Natural killer cell (primary cell): ENCODE measurements at regions of chr17 and their contacts with region 1.

Region 1: DNA sequence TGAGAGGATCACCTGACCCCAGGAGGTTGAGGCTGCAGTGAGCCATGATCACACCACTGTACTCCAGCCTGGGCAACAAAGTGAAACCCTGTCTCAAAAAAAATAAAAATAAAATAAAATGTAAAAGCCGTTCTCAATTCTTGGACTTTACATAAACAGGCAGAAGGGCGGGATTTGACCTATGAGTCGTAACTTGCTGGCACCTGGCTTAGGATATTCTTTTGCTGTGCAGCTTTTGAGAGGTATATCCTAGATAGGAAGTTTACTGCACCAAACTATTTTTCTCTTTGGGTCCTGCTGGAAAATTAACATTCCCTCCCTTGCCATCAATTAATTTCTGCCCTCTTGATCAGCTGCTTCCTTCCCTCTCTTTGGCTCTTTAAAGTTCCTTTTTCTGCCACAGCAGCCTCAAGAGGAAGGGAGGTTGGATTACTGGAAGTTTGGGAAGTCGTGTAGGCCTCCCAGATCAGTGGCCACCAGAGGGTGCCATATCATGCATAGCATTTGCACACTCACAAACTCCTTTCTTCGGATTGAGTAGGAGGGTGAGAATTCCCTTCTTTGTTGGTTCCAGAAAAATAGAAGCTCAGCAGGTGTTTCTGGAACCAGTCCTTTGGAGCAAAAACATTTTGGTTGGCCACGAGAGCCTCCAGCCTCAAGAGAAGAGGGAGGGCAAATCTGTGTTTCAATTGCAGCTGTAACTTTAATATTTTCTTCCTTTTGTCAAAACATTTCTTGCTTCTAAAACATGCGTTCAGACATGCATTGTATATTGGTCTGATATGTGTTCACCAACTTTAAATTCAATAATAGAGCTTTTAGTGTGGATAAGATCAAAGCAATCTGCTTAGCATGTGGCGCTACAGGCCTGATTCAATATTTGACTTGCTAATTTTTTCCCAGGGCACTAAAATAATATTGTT is 147.3 kb downstream of the CCDC182 start:
- DNase-seq: peak in 1 of 2 donors; percentile 67
- ATAC-seq: no peak
- H3K4me3 ChIP-seq: no peak overlapping the region
- H3K4me3 Mint-ChIP-seq: peak overlapping the region; percentile 28
- H3K27ac ChIP-seq: no peak overlapping the region
- H3K27ac Mint-ChIP-seq: no peak overlapping the region
- H3K4me1 ChIP-seq: peaks cover 49% of the 10 kb centered on the region
- H3K4me1 Mint-ChIP-seq: peaks cover 45 to 58% of the 10 kb centered on the region in 2 donors
- H3K27me3 ChIP-seq: no peaks in the 10 kb centered on the region
- H3K27me3 Mint-ChIP-seq: no peaks in the 10 kb centered on the region
- CTCF ChIP-seq: peak; percentile 64

Region 2: DNA sequence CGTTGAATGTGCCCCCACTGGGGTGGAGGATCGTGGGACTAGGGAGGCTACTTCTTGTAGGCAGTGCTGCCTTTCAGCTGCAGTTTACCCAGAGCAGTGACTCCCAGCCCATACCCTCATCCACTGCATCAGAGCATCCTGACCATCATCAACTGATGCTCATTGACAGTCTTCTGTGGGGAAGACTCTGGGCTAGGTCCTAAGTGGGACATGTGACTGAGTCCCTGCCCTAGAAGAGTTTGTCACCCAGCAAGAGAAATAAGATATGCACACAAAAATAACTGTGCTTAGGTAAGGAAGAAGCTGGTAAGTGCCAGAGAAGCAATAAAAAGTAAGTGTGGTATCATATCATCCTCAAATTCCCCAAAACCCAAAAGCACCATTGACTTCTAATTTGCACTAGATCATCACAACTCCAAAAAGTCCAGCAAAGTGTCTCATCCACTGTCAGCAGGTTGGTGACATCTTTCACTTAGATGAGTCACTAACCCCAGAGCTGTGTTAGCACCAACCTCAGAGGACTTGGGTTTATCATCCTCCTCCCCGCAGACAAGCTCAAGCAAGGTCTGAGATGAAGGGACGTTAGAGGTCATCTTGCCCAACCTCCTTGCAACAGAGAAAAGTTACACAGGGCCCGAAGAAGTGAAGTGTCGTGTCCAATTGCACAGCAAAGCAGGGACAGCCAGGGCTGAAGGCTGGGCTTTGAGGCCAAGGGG is 48.3 kb after region 1 on chr17:
- intact Hi-C with region 1: loop called (anchors 2 kb)
- DNase-seq: peak; percentile 19 to 23
- ATAC-seq: peak; percentile 77 to 94 (median 90)
- H3K4me3 ChIP-seq: no peak overlapping the region
- H3K4me3 Mint-ChIP-seq: no peak overlapping the region
- H3K27ac ChIP-seq: peak overlapping the region; percentile 3
- H3K27ac Mint-ChIP-seq: peak overlapping the region; percentile 27 to 49
- H3K4me1 ChIP-seq: peaks cover 15% of the 10 kb centered on the region
- H3K4me1 Mint-ChIP-seq: peaks cover 6 to 13% of the 10 kb centered on the region in 2 donors
- H3K27me3 ChIP-seq: no peaks in the 10 kb centered on the region
- H3K27me3 Mint-ChIP-seq: no peaks in the 10 kb centered on the region
- CTCF ChIP-seq: no peak

Region 3: DNA sequence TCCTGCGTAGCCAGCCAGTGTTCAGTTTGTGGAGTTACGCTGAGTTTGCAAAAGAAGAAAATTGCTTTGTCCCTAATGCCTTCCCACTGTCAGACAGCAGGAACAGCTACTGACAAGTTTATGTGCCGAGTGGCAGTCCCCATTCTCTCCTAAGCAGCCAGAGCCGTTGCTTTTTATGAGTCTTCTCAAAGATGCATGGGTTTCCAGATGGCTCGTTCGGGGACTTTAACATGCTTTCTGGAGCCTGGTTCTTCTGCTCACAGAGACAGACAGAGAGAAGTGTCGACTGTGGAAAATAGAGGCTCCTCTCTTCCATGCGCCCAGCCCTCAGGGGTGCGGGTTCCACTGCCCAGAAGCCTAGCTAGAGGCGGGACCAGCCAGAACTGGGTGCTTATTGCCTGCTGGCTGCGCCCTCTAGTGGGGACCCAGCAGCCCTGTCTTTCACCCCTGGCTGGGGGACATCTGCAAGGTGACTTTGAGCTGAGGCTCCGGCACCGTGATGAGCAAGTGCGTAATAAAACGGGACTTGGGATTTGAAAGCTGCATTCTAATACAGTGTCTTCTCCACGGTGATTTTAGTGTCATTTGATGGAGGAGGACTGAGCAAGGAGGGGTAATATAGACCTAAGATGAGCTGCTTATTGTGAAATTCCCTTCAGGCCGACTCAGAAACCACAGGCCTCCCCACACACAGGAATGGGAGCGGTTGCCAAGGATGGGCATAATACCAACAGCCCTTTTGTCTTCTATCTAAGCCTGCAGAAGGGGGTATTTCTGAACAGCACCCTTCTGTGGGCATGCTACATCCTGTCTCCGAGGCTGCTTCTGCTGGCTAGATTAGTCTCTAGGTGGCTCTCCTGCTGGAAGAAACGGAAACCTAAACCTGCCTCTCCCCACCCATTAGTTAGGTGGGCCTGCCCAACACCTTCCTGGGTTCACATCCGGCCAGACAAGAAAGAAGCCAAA is 74.2 kb after region 1 on chr17:
- intact Hi-C with region 1: loop called (anchors 1 kb)
- DNase-seq: peak; percentile 52 to 85
- ATAC-seq: peak; percentile 80 to 92 (median 87)
- H3K4me3 ChIP-seq: no peak overlapping the region
- H3K4me3 Mint-ChIP-seq: peak overlapping the region; percentile 35
- H3K27ac ChIP-seq: peak overlapping the region; percentile 8
- H3K27ac Mint-ChIP-seq: peak overlapping the region; percentile 31 to 43
- H3K4me1 ChIP-seq: peaks cover 26% of the 10 kb centered on the region
- H3K4me1 Mint-ChIP-seq: peaks cover 17 to 32% of the 10 kb centered on the region in 2 donors
- H3K27me3 ChIP-seq: no peaks in the 10 kb centered on the region
- H3K27me3 Mint-ChIP-seq: no peaks in the 10 kb centered on the region
- CTCF ChIP-seq: peak; percentile 92

Region 4: DNA sequence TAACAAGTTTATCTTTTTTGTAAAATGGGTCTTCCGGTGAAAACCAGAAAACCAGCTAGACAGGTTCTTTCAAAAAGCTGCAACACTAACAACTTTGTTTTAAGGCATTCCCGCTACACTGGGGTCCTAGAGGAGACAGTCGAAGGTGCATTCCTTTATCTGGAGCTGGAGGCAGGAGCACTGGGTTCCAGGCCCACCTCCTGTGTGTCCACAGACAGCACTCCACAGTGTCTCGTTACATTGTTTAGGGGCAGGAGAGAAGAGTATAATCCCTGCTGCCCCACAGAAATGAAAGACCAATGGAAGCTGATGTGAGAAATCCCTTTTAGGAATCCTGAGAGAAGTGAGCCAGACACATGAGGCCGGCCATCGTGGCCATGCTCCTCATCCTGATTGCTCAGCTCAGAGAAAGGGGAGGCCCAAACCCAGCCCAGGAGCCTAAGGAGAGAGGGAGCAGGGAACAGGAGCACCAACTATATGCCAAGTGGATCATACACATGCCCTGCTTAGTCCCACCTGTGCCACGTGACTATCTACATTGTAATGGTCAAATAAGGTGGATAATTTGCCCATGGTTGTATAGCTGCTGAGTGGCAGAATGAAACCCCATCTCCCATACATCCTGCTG is 87.8 kb after region 1 on chr17:
- intact Hi-C with region 1: no loop called
- DNase-seq: no peak
- ATAC-seq: no peak
- H3K4me3 ChIP-seq: no peak overlapping the region
- H3K4me3 Mint-ChIP-seq: no peak overlapping the region
- H3K27ac ChIP-seq: no peak overlapping the region
- H3K27ac Mint-ChIP-seq: no peak overlapping the region
- H3K4me1 ChIP-seq: no peaks in the 10 kb centered on the region
- H3K4me1 Mint-ChIP-seq: no peaks in the 10 kb centered on the region
- H3K27me3 ChIP-seq: no peaks in the 10 kb centered on the region
- H3K27me3 Mint-ChIP-seq: peaks cover 0 to 3% of the 10 kb centered on the region in 2 donors
- CTCF ChIP-seq: no peak